ENCODE measurements at regions of chr14 and their contacts with region 1.

Region 1: DNA sequence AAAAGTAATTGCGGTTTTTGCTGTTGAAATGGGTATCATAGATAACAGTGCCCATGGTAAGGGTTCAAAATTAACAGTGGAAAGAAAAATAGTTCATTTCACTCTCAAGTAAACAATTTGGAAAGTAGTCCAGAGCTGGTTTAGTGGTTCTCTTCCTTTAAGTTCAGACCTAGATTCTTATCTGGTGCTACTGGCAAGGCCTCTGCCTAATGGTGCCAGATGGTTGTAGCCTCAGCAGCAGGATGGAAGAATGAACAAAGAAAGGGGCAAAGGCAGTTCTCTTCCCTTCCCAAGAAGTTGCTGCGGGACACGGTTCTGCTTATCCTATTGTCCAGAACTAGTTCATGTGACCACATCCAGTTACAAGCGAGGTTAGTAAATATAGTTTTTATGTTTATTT is 10.5 kb downstream of the ARG2 start:
- DNase-seq: no peak
- ATAC-seq: no peak
- H3K4me3 Mint-ChIP-seq: no peak overlapping the region
- H3K27ac Mint-ChIP-seq: no peak overlapping the region
- H3K4me1 Mint-ChIP-seq: no peaks in the 10 kb centered on the region
- H3K27me3 Mint-ChIP-seq: no peaks in the 10 kb centered on the region
- CTCF ChIP-seq: no peak

Region 2: GRCh38 chr14:67541448-67542387 is 88.5 kb before region 1 on chr14:
- CTCF ChIA-PET with region 1: no interaction called
- POLR2A ChIA-PET with region 1: no interaction called
- intact Hi-C with region 1: no loop called
- DNase-seq: no peak
- ATAC-seq: no peak
- H3K4me3 Mint-ChIP-seq: peak overlapping the region; percentile 72
- H3K27ac Mint-ChIP-seq: no peak overlapping the region
- H3K4me1 Mint-ChIP-seq: peaks cover 9% of the 10 kb centered on the region
- H3K27me3 Mint-ChIP-seq: peaks cover 37% of the 10 kb centered on the region
- CTCF ChIP-seq: no peak

Region 3: GRCh38 chr14:67557126-67557525 is 73.1 kb before region 1 on chr14:
- CTCF ChIA-PET with region 1: no interaction called
- POLR2A ChIA-PET with region 1: no interaction called
- intact Hi-C with region 1: no loop called
- DNase-seq: no peak
- ATAC-seq: no peak
- H3K4me3 Mint-ChIP-seq: no peak overlapping the region
- H3K27ac Mint-ChIP-seq: no peak overlapping the region
- H3K4me1 Mint-ChIP-seq: no peaks in the 10 kb centered on the region
- H3K27me3 Mint-ChIP-seq: peaks cover 2% of the 10 kb centered on the region
- CTCF ChIP-seq: no peak

Region 4: DNA sequence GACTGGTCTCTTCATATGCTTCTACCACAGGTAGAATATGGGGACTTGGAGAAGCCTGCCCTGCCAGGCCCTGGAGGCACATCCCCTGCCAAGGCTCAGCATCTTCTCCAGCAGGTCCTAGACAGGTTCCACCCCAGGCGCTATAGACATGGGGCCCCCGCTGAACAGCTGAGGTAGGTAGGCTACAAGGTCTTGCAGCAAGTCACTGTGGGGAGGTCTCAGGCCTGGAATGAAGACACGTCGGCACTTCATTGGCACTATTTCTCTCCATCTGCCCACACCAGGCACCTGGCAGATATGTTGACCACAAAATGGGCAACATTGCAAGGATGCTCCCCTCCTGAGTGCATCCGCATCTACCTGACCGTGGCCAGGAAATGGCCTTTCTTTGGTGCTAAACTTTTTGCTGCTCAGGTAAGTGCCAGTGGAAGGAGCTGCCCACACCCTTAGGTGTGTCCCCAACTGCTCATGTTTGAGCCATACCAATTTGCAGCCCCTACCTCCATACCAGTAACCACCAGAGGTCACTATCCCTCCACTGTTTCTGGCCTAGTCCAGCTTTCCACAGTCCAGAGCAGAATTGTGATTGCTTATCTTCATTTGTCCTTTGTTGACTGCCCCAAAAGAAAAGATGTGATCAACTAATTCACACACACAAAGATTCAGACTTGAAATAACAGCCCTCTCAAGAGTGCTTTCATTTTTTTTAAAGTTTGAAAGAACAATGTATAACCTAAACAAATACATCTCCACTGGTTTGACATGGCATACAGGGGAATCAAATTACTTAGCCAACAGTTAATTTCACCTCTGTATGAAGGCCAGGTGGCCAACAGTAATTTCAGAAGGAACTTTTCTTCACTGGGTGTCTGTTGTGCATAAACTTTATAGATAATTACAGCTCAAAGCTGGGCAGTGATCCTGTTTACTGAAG is 46.2 kb before region 1 on chr14:
- CTCF ChIA-PET with region 1: interaction called, 4 read pairs
- POLR2A ChIA-PET with region 1: no interaction called
- intact Hi-C with region 1: loop called (anchors 5 kb)
- DNase-seq: no peak
- ATAC-seq: peak; percentile 80
- H3K4me3 Mint-ChIP-seq: no peak overlapping the region
- H3K27ac Mint-ChIP-seq: no peak overlapping the region
- H3K4me1 Mint-ChIP-seq: peaks cover 5% of the 10 kb centered on the region
- H3K27me3 Mint-ChIP-seq: no peaks in the 10 kb centered on the region
- CTCF ChIP-seq: peak; percentile 46